Activated CD4-positive, alpha-beta T cell treated with anti-CD3 and anti-CD28 coated beads for 36 hours (primary cell): ENCODE measurements at regions of chr10 and their contacts with region 1.

Region 1: DNA sequence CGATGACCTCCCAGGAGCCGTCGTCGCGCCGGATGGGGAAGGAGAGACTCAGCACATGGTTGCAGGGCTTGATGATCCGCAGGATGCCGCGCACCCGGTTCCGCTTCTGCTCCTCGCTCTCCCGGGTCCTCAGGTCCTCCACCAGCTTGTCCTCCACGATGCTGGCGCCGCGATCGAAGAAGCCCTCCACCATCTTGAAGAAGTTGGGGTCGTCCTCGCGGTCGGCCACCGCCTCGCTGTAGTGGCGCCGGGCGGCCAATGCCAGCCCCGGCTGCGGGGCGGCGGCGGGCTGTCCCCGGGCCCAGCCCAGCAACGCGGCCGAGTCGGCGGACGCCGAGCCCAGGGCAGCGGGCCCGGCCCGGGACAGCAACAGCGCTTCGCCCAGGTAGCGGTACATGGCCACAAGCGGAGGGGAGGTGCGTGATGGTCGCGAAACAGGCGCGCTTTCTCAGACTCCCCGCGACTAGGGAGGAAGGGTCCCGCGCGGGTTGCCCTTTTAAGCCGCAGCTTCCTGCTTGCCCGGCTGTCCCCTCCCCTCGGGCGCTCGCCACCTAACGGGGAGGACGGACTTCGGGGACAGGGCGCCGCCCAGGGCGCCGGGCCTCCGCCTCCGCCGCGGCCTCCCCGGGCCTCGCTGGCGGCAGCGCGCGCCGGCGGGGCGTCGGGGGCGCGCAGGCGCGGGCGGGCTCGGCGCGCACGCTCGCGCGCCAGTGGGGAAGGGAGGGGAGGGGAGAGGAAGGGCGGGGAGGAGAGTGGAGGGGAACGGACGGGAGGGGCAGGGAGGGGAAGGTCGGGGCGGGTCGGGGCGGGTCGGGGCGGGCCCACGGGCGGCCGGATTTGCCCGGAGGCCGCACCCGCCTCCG is at the starts of genes GLUD1 and SHLD2:
- DNase-seq: peak; percentile 94
- ATAC-seq: peak; percentile 80
- H3K4me3 Mint-ChIP-seq: peak within 1 kb of the TSS; percentile 85
- H3K27ac Mint-ChIP-seq: peak within 1 kb of the TSS; percentile 91
- H3K4me1 Mint-ChIP-seq: peaks cover 34% of the 10 kb centered on the region
- H3K27me3 Mint-ChIP-seq: no peaks in the 10 kb centered on the region
- total RNA-seq, gene GLUD1: 98.4 to 125 TPM
- total RNA-seq, gene SHLD2: 29.7 to 29.9 TPM

Region 2: DNA sequence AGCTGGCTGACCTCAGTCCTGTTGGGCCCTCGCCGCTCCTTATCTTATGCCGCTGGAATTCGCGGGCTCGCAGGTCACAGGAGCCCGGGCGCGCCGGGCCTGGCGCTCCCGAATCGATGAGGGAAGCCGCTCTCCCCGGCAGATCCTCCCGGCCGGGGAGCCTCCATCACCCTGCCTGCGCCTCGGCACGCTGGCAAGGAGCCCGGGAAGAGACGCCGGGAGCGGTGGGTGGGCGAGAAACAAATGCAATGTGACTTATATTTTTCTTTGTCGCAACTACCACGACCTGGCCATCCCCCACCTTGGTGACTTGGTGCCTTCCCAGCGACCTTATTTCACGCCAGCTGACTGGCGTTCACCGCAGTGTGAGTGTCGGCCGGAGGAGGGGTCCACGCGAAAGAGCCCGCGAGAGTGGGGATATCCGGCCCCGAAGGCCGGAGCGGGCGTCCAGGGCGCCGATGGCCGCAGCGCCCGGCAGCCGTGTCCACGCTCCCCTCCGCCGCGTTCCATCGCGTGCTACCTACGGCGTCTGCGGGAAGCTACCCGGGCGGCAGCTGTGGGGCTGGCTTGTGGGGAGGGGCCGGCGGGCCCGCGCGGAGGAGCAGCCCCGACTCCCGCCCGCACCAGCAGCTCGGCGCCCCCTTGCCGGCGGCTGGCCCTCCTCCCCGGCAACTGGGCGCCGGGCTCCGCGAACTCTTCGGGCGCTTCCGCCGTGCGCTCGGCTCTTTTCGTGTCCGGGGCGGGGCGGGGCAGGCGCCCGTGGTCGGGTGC is 338.7 kb before region 1 on chr10:
- CTCF ChIA-PET with region 1: no interaction called
- POLR2A ChIA-PET with region 1: no interaction called
- intact Hi-C with region 1: loop called (anchors 1 to 5 kb)
- DNase-seq: peak; percentile 93
- ATAC-seq: peak; percentile 96
- H3K4me3 Mint-ChIP-seq: peak overlapping the region; percentile 85
- H3K27ac Mint-ChIP-seq: peak overlapping the region; percentile 72
- H3K4me1 Mint-ChIP-seq: peaks cover 33% of the 10 kb centered on the region
- H3K27me3 Mint-ChIP-seq: peaks cover 26% of the 10 kb centered on the region

Region 3: GRCh38 chr10:86815035-86815617 is 279.5 kb before region 1 on chr10:
- CTCF ChIA-PET with region 1: no interaction called
- POLR2A ChIA-PET with region 1: no interaction called
- intact Hi-C with region 1: no loop called
- DNase-seq: no peak
- ATAC-seq: no peak
- H3K4me3 Mint-ChIP-seq: no peak overlapping the region
- H3K27ac Mint-ChIP-seq: no peak overlapping the region
- H3K4me1 Mint-ChIP-seq: no peaks in the 10 kb centered on the region
- H3K27me3 Mint-ChIP-seq: no peaks in the 10 kb centered on the region

Region 4: DNA sequence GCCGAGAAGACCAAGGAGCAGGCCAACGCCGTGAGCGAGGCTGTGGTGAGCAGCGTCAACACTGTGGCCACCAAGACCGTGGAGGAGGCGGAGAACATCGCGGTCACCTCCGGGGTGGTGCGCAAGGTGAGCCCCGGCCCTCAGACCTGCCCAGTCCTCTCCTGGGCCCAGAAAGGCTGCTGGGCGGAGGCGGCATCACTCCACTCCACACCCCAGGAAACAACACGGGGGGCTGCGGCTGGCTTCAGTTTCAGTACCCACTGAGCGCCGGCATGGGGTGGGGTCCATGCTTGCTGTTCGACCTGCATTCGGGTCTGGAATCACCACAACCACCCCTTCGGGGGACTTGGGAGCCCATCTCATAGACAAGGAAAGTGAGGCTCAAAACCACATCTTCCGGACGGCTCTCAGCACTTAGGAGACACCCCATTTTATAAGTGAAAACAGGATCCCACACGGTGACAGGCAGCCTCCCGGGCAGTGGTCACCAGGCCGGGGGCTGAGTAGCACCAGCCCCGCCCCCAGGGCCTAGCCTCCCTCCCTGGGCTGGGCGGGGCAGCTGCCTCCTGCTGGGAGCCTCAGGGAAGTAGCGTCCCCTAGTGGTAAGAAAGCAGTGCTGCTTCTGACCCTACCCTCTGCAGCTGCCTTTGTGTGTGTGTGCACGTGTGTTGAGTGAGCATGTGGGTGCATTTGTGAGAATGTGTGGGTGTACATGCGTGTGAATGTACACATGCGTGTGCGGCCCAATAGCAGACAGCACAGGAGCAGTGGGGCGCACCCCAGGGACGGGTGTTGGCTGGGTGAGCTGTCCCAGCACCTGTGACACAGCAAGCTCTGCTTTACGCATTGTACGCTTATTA is 134.4 kb before region 1 on chr10:
- CTCF ChIA-PET with region 1: no interaction called
- POLR2A ChIA-PET with region 1: no interaction called
- intact Hi-C with region 1: loop called in 1 of 2 experiments (anchors 10 kb)
- DNase-seq: peak; percentile 69
- ATAC-seq: peak; percentile 94
- H3K4me3 Mint-ChIP-seq: no peak overlapping the region
- H3K27ac Mint-ChIP-seq: no peak overlapping the region
- H3K4me1 Mint-ChIP-seq: no peaks in the 10 kb centered on the region
- H3K27me3 Mint-ChIP-seq: no peaks in the 10 kb centered on the region

Region 5: DNA sequence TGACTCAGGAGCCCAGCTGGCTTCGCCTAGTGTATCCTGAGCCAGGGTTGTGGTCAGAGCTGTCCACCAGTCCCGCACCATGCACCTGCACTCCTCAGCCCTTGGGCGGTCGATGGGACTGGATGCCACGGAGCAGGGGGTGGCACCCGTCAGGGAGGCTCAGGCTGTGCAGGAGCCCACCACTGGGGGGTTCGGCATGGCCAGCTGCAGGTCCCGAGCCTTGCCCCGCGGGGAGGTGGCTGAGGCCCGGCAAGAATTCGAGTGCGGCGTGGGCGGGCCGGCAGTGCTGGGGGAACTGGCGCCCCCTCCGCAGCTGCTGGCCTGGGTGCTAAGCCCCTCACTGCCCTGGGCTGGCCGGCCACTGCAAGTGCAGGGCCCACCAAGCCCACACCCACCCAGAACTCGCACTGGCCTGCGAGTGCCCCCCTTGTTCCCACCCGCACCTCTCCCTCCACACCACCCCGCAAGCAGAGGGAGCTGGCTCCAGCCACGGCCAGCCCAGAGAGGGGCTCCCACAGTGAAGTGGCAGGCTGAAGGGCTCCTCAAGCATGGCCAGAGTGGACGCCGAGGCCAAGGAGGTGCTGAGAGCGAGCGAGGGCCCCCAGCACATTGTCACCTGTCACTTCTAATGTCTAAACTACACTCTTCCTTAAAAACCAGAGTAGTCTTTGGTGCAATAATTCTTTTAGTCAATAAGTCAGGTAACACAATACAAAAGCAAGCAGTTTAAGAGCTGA is 63.5 kb before region 1 on chr10:
- CTCF ChIA-PET with region 1: no interaction called
- POLR2A ChIA-PET with region 1: no interaction called
- intact Hi-C with region 1: loop called in 1 of 2 experiments (anchors 5 kb)
- DNase-seq: no peak
- ATAC-seq: no peak
- H3K4me3 Mint-ChIP-seq: no peak overlapping the region
- H3K27ac Mint-ChIP-seq: no peak overlapping the region
- H3K4me1 Mint-ChIP-seq: no peaks in the 10 kb centered on the region
- H3K27me3 Mint-ChIP-seq: no peaks in the 10 kb centered on the region

Region 6: GRCh38 chr10:87504640-87505365 is 410.2 kb after region 1 on chr10 and contains the start of gene MINPP1:
- CTCF ChIA-PET with region 1: no interaction called
- POLR2A ChIA-PET with region 1: no interaction called
- intact Hi-C with region 1: loop called in 1 of 2 experiments (anchors 2 kb)
- DNase-seq: peak; percentile 94
- ATAC-seq: peak; percentile 92
- H3K4me3 Mint-ChIP-seq: peak within 1 kb of the TSS; percentile 92
- H3K27ac Mint-ChIP-seq: peak within 1 kb of the TSS; percentile 94
- H3K4me1 Mint-ChIP-seq: peaks cover 40% of the 10 kb centered on the region
- H3K27me3 Mint-ChIP-seq: no peaks in the 10 kb centered on the region
- total RNA-seq, gene MINPP1: 8.3 TPM